Prostate gland (tissue), 2 donors: ENCODE measurements at regions of chr16 and their contacts with region 1.

Region 1: GRCh38 chr16:11164482-11165270 is 91.3 kb downstream of the SOCS1 start:
- DNase-seq: no peak
- H3K4me3 ChIP-seq: no peak overlapping the region
- H3K27ac ChIP-seq: no peak overlapping the region
- H3K4me1 ChIP-seq: no peaks in the 10 kb centered on the region
- H3K27me3 ChIP-seq: no peaks in the 10 kb centered on the region
- CTCF ChIP-seq: no peak
- POLR2A ChIP-seq: no peak

Region 2: GRCh38 chr16:11105038-11105903 is 59.4 kb before region 1 on chr16:
- intact Hi-C with region 1: loop called (anchors 5 kb)
- DNase-seq: peak; percentile 9
- H3K4me3 ChIP-seq: no peak overlapping the region
- H3K27ac ChIP-seq: no peak overlapping the region
- H3K4me1 ChIP-seq: no peaks in the 10 kb centered on the region
- H3K27me3 ChIP-seq: no peaks in the 10 kb centered on the region
- CTCF ChIP-seq: no peak
- POLR2A ChIP-seq: no peak

Region 3: DNA sequence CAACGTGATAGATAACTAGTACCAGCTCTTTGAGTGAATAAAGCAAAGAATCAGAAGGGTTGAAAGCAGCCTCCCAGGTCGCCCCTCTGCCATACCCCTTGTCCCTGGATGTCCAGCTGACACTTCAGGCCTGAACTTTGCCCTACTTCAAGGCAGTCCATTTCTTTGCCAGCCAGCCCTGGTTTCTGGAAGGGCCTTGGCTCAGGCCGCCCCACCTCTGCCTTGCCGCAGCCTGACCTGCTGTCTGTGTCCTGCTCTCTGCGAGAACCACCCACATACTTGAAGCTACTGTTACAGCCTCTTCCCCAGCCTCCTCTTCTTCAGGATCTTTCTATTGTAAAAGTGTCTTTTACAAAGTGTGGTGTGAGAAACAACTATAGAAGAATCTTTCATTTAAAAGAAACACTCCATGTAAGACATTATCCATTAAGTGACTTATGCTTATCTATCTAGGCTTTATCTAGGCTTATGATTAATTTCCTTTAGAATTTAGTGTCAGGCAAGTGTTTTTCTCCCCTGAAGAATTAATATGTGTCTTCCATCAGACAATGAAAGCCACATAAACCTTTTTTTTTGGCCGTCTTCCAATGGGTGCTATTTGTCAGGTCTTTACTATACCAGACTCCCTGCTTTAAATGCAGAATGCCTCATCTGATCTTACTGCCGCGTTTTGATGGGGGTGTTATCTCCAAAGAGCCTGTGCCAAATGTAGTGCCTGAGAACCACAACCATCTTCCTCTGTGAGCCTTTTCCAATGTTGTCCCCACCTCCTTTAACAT is 42.6 kb before region 1 on chr16:
- intact Hi-C with region 1: no loop called
- DNase-seq: no peak
- H3K4me3 ChIP-seq: no peak overlapping the region
- H3K27ac ChIP-seq: no peak overlapping the region
- H3K4me1 ChIP-seq: no peaks in the 10 kb centered on the region
- H3K27me3 ChIP-seq: no peaks in the 10 kb centered on the region
- CTCF ChIP-seq: no peak
- POLR2A ChIP-seq: no peak

Region 4: DNA sequence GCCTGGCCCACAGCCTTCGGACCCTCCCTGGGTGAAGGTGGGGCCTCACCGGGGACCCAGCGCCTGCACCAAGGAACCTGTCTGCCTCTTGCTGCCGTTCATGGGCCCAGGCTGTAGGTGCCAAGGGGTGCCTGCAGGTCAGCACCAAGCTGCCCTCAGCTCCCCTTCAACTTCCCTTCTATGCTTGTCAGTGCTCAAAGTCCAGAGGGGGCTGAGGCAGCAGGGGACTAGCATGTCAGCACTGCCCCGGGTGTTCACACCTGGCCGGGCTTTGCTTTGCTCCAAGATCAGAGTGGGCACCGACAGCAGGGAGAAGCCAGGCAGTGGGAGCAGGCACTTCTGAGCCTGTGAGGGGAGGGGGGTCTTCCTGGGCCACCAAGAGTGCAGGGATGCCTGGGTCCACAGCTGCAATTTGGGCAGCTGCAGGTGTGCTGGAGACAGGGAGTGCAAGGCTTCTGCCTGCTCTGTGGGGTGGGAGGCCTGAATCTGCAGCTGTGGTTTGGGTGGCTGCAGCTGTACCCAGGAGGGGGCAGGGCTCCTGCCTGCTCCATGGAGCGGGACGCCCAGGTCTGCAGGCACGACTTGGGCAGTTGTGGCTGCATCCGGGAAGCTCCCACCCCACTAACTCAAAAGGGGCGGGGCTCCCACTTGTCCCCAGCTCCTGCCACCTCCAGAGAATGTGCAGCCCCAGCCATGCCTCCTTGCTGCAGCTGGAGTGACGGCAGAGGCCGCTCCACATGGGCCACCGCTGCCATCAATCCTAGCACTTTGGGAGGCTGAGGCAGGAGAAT is 144.0 kb after region 1 on chr16:
- intact Hi-C with region 1: no loop called
- DNase-seq: no peak
- H3K4me3 ChIP-seq: no peak overlapping the region
- H3K27ac ChIP-seq: no peak overlapping the region
- H3K4me1 ChIP-seq: no peaks in the 10 kb centered on the region
- H3K27me3 ChIP-seq: no peaks in the 10 kb centered on the region
- CTCF ChIP-seq: no peak
- POLR2A ChIP-seq: no peak